Activated B cell treated with CpG ODN at 0.5 μM for 24 hours (primary cell): ENCODE measurements at regions of chr5 and their contacts with region 1.

Region 1: GRCh38 chr5:38420691-38421390 is 135.6 kb downstream of the LIFR start:
- DNase-seq: no peak
- ATAC-seq: no peak
- H3K4me3 Mint-ChIP-seq: no peak overlapping the region
- H3K27ac Mint-ChIP-seq: no peak overlapping the region
- H3K4me1 Mint-ChIP-seq: no peaks in the 10 kb centered on the region
- H3K27me3 Mint-ChIP-seq: peaks cover 22% of the 10 kb centered on the region
- CTCF ChIP-seq: no peak

Region 2: DNA sequence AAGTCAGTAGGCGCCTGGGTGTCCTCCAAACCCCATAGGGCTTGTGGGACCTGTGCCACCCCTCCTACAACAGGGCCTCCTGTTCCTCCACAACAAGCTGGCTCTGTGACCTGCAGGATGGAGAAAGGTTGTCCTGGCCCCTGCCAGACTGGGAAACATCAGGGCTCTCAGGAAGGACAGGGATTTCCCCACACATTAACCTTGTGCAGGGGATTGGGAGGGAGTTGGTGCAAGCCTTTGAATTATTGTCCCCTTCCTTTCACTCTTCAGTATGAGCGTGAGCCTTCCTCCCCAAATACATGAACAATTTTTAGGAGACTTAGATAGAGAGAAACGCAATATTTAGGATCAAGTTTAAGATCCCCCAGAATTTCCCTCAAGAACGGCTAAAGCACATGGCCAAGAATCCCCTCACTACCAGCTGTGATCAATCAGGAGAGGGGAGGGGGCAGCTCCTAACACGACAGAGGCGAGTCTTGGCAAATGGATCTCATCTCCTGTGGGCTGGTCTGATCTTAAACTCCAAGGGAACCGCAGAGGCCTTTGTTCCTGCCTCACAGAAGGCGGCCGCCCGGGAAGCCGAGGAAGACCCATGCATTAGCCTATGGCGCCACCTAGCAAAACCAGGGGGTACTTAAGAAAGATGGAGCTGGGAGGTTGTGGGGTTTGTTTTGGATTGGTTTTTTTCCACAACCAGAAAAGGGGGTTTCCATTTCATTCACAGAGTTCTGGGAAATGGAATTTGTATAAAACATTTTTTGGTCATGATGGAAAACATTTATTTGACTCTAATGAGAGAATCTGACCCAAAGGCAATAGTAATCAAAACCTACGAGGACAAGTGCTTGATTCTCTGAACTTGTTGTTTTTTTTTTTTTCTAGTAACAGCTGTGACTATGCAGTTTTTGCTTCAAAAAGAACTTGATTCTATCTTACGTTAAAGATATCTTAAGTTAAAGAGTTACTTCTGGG is 388.8 kb after region 1 on chr5:
- CTCF ChIA-PET with region 1: interaction called, 5 read pairs
- POLR2A ChIA-PET with region 1: no interaction called
- intact Hi-C with region 1: loop called (anchors 5 kb)
- DNase-seq: no peak
- ATAC-seq: no peak
- H3K4me3 Mint-ChIP-seq: no peak overlapping the region
- H3K27ac Mint-ChIP-seq: no peak overlapping the region
- H3K4me1 Mint-ChIP-seq: no peaks in the 10 kb centered on the region
- H3K27me3 Mint-ChIP-seq: peaks cover 17% of the 10 kb centered on the region
- CTCF ChIP-seq: no peak